Activated T-helper 1 cell treated with anti-CD3 and anti-CD28 coated beads, Interleukin-12 subunit alpha, Interleukin-12 subunit beta, Interleukin-2, Interleukin-4 antibody, amounts not matched to agents 30 ng/mL and 10 ng/mL and 1 ng/mL, durations not matched to agents 14 hours and 24 hours and 36 hours (primary cell): ENCODE measurements at regions of chr15 and their contacts with region 1.

Region 1: GRCh38 chr15:66946578-66947164 is 118.7 kb upstream of the SMAD3 start:
- DNase-seq: peak; percentile 64
- H3K4me3 Mint-ChIP-seq: no peak overlapping the region
- H3K27ac Mint-ChIP-seq: no peak overlapping the region
- H3K4me1 Mint-ChIP-seq: peaks cover 24% of the 10 kb centered on the region
- H3K27me3 Mint-ChIP-seq: peaks cover 5% of the 10 kb centered on the region

Region 2: GRCh38 chr15:66923438-66923881 is 23.2 kb before region 1 on chr15:
- intact Hi-C with region 1: no loop called
- DNase-seq: peak; percentile 10
- H3K4me3 Mint-ChIP-seq: no peak overlapping the region
- H3K27ac Mint-ChIP-seq: no peak overlapping the region
- H3K4me1 Mint-ChIP-seq: peaks cover 11% of the 10 kb centered on the region
- H3K27me3 Mint-ChIP-seq: peaks cover 11% of the 10 kb centered on the region

Region 3: GRCh38 chr15:67024314-67024997 is 77.8 kb after region 1 on chr15:
- intact Hi-C with region 1: loop called (anchors 5 kb)
- DNase-seq: no peak
- H3K4me3 Mint-ChIP-seq: peak overlapping the region; percentile 29
- H3K27ac Mint-ChIP-seq: peak overlapping the region; percentile 37
- H3K4me1 Mint-ChIP-seq: peaks cover 45% of the 10 kb centered on the region
- H3K27me3 Mint-ChIP-seq: peaks cover 9% of the 10 kb centered on the region

Region 4: GRCh38 chr15:67065444-67066093 is 118.9 kb after region 1 on chr15 and contains the start of gene SMAD3:
- intact Hi-C with region 1: loop called (anchors 1 kb)
- DNase-seq: peak; percentile 81
- H3K4me3 Mint-ChIP-seq: peak within 1 kb of the TSS; percentile 100
- H3K27ac Mint-ChIP-seq: peak within 1 kb of the TSS; percentile 95
- H3K4me1 Mint-ChIP-seq: peaks cover 65% of the 10 kb centered on the region
- H3K27me3 Mint-ChIP-seq: peaks cover 3% of the 10 kb centered on the region
- total RNA-seq, gene SMAD3: 80.2 and 80.4 TPM in 2 replicates

Region 5: GRCh38 chr15:67175643-67176071 is 229.0 kb after region 1 on chr15:
- intact Hi-C with region 1: loop called (anchors 2 kb)
- DNase-seq: no peak
- H3K4me3 Mint-ChIP-seq: peak overlapping the region; percentile 31
- H3K27ac Mint-ChIP-seq: peak overlapping the region; percentile 83
- H3K4me1 Mint-ChIP-seq: peaks cover 82% of the 10 kb centered on the region
- H3K27me3 Mint-ChIP-seq: no peaks in the 10 kb centered on the region

Region 6: DNA sequence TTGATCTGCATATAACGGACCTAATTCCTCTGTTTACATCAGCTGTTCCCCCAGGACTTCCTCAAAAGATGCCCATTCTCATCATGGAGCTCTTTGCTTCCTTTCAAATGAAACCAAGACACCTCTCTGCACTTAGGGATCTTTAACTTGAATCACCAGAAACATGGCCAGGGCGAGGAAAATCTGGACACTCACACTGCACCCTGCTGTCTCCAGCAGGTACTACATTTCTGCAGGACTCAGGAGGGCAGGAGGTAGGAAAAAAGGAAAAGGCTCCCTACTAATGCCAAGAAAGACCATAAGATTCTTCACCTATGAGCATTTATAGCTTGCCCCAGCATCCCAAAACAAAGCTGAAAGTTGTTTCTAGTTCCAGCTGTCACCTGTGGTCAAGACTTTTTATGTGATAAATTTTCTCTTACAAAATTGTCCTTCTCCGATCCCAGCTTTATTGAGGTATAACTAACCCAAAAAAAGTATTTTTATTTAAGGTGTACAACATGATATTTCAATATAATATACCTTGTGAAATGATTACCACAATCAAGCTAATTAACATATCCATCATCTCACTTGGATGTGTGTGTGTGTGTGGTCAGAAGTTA is 486.9 kb after region 1 on chr15:
- intact Hi-C with region 1: loop called (anchors 1 kb)
- DNase-seq: no peak
- H3K4me3 Mint-ChIP-seq: no peak overlapping the region
- H3K27ac Mint-ChIP-seq: no peak overlapping the region
- H3K4me1 Mint-ChIP-seq: no peaks in the 10 kb centered on the region
- H3K27me3 Mint-ChIP-seq: peaks cover 5% of the 10 kb centered on the region